T-cell (primary cell): ENCODE measurements at regions of chr10 and their contacts with region 1.

Region 1: GRCh38 chr10:6036861-6037321 is 25.3 kb downstream of the IL2RA start:
- DNase-seq: peak in 20 of 35 experiments; percentile 13 to 56 (median 29)
- ATAC-seq: peak; percentile 32 to 76 (median 46)
- H3K4me3 ChIP-seq: no peak overlapping the region
- H3K4me3 Mint-ChIP-seq: peak overlapping the region in 2 of 3 donors; percentile 24 to 55
- H3K27ac ChIP-seq: peak overlapping the region; percentile 74
- H3K27ac Mint-ChIP-seq: peak overlapping the region; percentile 95 to 96
- H3K4me1 ChIP-seq: peaks cover 18 to 41% of the 10 kb centered on the region in 2 experiments
- H3K4me1 Mint-ChIP-seq: peaks cover 51 to 75% (median 53%) of the 10 kb centered on the region in 3 donors
- H3K27me3 ChIP-seq: no peaks in the 10 kb centered on the region
- H3K27me3 Mint-ChIP-seq: no peaks in the 10 kb centered on the region

Region 2: GRCh38 chr10:5147255-5147980 is 889.5 kb before region 1 on chr10:
- CTCF ChIA-PET with region 1: no interaction called
- POLR2A ChIA-PET with region 1: no interaction called
- DNase-seq: no peak
- ATAC-seq: no peak
- H3K4me3 ChIP-seq: no peak overlapping the region
- H3K4me3 Mint-ChIP-seq: no peak overlapping the region
- H3K27ac ChIP-seq: no peak overlapping the region
- H3K27ac Mint-ChIP-seq: no peak overlapping the region
- H3K4me1 ChIP-seq: no peaks in the 10 kb centered on the region
- H3K4me1 Mint-ChIP-seq: no peaks in the 10 kb centered on the region
- H3K27me3 ChIP-seq: no peaks in the 10 kb centered on the region
- H3K27me3 Mint-ChIP-seq: no peaks in the 10 kb centered on the region

Region 3: GRCh38 chr10:5996696-5997095 is 40.2 kb before region 1 on chr10:
- CTCF ChIA-PET with region 1: no interaction called
- POLR2A ChIA-PET with region 1: no interaction called
- DNase-seq: no peak
- ATAC-seq: no peak
- H3K4me3 ChIP-seq: no peak overlapping the region
- H3K4me3 Mint-ChIP-seq: no peak overlapping the region
- H3K27ac ChIP-seq: no peak overlapping the region
- H3K27ac Mint-ChIP-seq: no peak overlapping the region
- H3K4me1 ChIP-seq: peaks cover 2% of the 10 kb centered on the region in 2 experiments
- H3K4me1 Mint-ChIP-seq: peaks cover 5 to 15% (median 12%) of the 10 kb centered on the region in 3 donors
- H3K27me3 ChIP-seq: peaks cover 0 to 21% of the 10 kb centered on the region in 2 experiments
- H3K27me3 Mint-ChIP-seq: peaks cover 4 to 11% of the 10 kb centered on the region in 2 donors

Region 4: DNA sequence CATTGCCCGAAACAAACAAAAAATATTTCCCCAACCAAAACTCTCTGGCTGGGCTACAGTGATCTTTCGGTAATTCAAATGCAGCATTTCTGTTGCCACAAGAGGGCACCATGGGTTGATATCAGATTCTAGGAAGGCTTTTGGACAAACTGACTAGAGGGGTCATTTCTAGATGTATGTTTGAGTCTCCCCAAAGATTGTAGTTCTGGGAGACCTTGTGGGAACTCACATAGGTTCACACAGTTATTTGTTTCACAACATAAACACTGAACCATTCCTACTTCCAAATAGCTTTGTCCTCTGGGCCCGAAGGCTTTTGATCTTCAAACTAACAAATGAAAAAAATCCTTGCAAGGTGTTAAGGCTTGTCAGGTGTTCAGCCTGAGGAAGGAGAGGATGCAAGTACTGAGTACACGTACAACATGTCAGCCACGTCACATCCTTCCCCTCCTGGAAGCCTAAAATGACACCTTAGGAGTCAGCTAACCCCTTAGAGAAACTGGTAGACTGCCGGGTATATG is 22.6 kb before region 1 on chr10:
- CTCF ChIA-PET with region 1: interaction called, 4 to 17 read pairs
- POLR2A ChIA-PET with region 1: interaction called in 1 of 2 experiments, 6 read pairs
- DNase-seq: peak; percentile 32 to 84 (median 66)
- ATAC-seq: peak; percentile 94 to 99 (median 96)
- H3K4me3 ChIP-seq: no peak overlapping the region
- H3K4me3 Mint-ChIP-seq: peak overlapping the region in 1 of 3 donors; percentile 34
- H3K27ac ChIP-seq: peak overlapping the region; percentile 87
- H3K27ac Mint-ChIP-seq: peak overlapping the region; percentile 89 to 93
- H3K4me1 ChIP-seq: peaks cover 6 to 16% of the 10 kb centered on the region in 2 experiments
- H3K4me1 Mint-ChIP-seq: peaks cover 14 to 29% (median 17%) of the 10 kb centered on the region in 3 donors
- H3K27me3 ChIP-seq: no peaks in the 10 kb centered on the region
- H3K27me3 Mint-ChIP-seq: peaks cover 0 to under 1% of the 10 kb centered on the region in 2 donors

Region 5: GRCh38 chr10:6062101-6062771 is 25.3 kb after region 1 on chr10 and contains the start of gene IL2RA:
- CTCF ChIA-PET with region 1: interaction called in 1 of 2 experiments, 5 read pairs
- POLR2A ChIA-PET with region 1: interaction called in 1 of 2 experiments, 11 read pairs
- DNase-seq: peak in 31 of 35 experiments; percentile 21 to 84 (median 41)
- ATAC-seq: peak; percentile 76 to 89 (median 79)
- H3K4me3 ChIP-seq: peak within 1 kb of the TSS; percentile 44 to 67
- H3K4me3 Mint-ChIP-seq: peak within 1 kb of the TSS; percentile 83 to 92 (median 85)
- H3K27ac ChIP-seq: peak within 1 kb of the TSS; percentile 61
- H3K27ac Mint-ChIP-seq: peak within 1 kb of the TSS; percentile 81 to 93
- H3K4me1 ChIP-seq: peaks cover 11 to 40% of the 10 kb centered on the region in 2 experiments
- H3K4me1 Mint-ChIP-seq: peaks cover 64 to 85% (median 65%) of the 10 kb centered on the region in 3 donors
- H3K27me3 ChIP-seq: peaks cover 0 to 3% of the 10 kb centered on the region in 2 experiments
- H3K27me3 Mint-ChIP-seq: no peaks in the 10 kb centered on the region
- total RNA-seq, gene IL2RA: 19.9 to 40.4 (median 28.1) TPM

Region 6: GRCh38 chr10:6101181-6101580 is 64.3 kb after region 1 on chr10:
- CTCF ChIA-PET with region 1: no interaction called
- POLR2A ChIA-PET with region 1: no interaction called
- DNase-seq: no peak
- ATAC-seq: no peak
- H3K4me3 ChIP-seq: no peak overlapping the region
- H3K4me3 Mint-ChIP-seq: no peak overlapping the region
- H3K27ac ChIP-seq: no peak overlapping the region
- H3K27ac Mint-ChIP-seq: no peak overlapping the region
- H3K4me1 ChIP-seq: peaks cover 0 to under 1% of the 10 kb centered on the region in 2 experiments
- H3K4me1 Mint-ChIP-seq: peaks cover 25 to 36% (median 33%) of the 10 kb centered on the region in 3 donors
- H3K27me3 ChIP-seq: no peaks in the 10 kb centered on the region
- H3K27me3 Mint-ChIP-seq: no peaks in the 10 kb centered on the region

Region 7: DNA sequence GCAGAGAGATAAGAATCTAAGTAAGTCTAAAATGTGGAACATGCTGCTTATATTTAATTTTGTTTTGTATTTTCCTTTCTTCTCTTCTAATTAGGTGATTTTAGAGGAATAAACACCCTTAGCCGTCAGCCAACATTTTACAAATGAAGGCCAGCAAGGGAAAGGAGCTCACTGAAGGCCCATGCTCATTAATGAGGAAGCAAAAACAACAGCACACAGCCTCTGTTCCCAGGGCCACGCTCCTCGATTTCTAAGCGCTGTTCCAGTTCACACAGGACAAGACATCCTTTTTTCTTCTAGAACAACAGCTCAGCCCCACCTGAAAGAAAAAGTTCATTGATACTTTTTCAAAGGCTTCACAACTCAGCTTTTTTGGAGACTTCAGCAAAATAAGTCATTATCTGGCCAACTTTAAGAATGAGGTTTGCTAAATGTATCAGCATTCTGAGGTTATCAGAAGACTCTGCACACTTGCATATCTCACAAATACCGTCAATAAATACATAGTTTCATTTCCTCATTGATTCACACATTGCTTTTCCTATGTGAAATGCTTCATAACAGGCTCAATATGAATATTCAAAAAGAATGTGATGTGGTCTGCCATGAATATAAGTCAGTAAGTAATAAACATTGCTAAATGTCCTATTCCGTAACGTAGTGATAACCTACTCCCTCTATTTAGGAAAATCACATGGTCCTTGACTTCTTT is 1408.7 kb after region 1 on chr10:
- CTCF ChIA-PET with region 1: no interaction called
- POLR2A ChIA-PET with region 1: no interaction called
- DNase-seq: no peak
- ATAC-seq: no peak
- H3K4me3 ChIP-seq: no peak overlapping the region
- H3K4me3 Mint-ChIP-seq: no peak overlapping the region
- H3K27ac ChIP-seq: no peak overlapping the region
- H3K27ac Mint-ChIP-seq: no peak overlapping the region
- H3K4me1 ChIP-seq: no peaks in the 10 kb centered on the region
- H3K4me1 Mint-ChIP-seq: peaks cover 4 to 16% (median 7%) of the 10 kb centered on the region in 3 donors
- H3K27me3 ChIP-seq: no peaks in the 10 kb centered on the region
- H3K27me3 Mint-ChIP-seq: no peaks in the 10 kb centered on the region